Mammary epithelial cell (primary cell): ENCODE measurements at regions of chr7 and their contacts with region 1.

Region 1: GRCh38 chr7:48537561-48537960 is 366.3 kb downstream of the ABCA13 start:
- DNase-seq: peak; percentile 93
- H3K4me3 ChIP-seq: no peak overlapping the region
- H3K27ac ChIP-seq: peak overlapping the region; percentile 58
- H3K4me1 ChIP-seq: no peaks in the 10 kb centered on the region
- H3K27me3 ChIP-seq: no peaks in the 10 kb centered on the region
- CTCF ChIP-seq: no peak

Region 2: DNA sequence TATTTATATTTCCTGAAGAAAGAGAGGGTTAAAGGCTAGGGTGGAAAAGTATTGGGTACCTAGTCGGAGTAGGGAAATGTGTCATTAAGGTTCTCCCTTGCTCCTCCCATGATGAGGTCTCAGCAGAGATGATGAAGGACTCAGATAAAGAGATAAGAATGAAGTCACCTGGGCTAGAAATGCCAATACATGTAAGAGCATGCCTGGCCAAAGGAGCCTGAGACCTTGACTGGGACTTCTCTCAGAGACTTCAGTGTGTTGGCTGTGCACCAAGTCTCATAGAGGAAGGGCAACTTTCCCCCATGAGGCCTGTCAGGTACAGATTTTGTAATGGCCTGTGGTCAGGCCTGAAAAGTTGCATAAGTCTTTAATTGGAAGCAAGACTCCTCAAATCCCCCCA is 25.8 kb after region 1 on chr7:
- CTCF ChIA-PET with region 1: no interaction called
- dilution Hi-C with region 1: no loop called
- in situ Hi-C with region 1: no loop called
- intact Hi-C with region 1: no loop called
- DNase-seq: peak; percentile 95
- H3K4me3 ChIP-seq: no peak overlapping the region
- H3K27ac ChIP-seq: no peak overlapping the region
- H3K4me1 ChIP-seq: peaks cover 13% of the 10 kb centered on the region
- H3K27me3 ChIP-seq: no peaks in the 10 kb centered on the region
- CTCF ChIP-seq: no peak

Region 3: GRCh38 chr7:48628793-48629349 is 91.3 kb after region 1 on chr7:
- CTCF ChIA-PET with region 1: no interaction called
- dilution Hi-C with region 1: no loop called
- in situ Hi-C with region 1: no loop called
- intact Hi-C with region 1: no loop called
- DNase-seq: no peak
- H3K4me3 ChIP-seq: no peak overlapping the region
- H3K27ac ChIP-seq: no peak overlapping the region
- H3K4me1 ChIP-seq: no peaks in the 10 kb centered on the region
- H3K27me3 ChIP-seq: no peaks in the 10 kb centered on the region
- CTCF ChIP-seq: no peak

Region 4: GRCh38 chr7:49878627-49879026 is 1341.1 kb after region 1 on chr7:
- CTCF ChIA-PET with region 1: no interaction called
- dilution Hi-C with region 1: no loop called
- in situ Hi-C with region 1: no loop called
- intact Hi-C with region 1: loop called (anchors 10 kb)
- DNase-seq: peak; percentile 39
- H3K4me3 ChIP-seq: no peak overlapping the region
- H3K27ac ChIP-seq: no peak overlapping the region
- H3K4me1 ChIP-seq: peaks cover 12% of the 10 kb centered on the region
- H3K27me3 ChIP-seq: no peaks in the 10 kb centered on the region
- CTCF ChIP-seq: no peak